Caco-2 (cell line): ENCODE measurements at regions of chr6 and their contacts with region 1.

Region 1: GRCh38 chr6:82712852-82713251 is 349.2 kb downstream of the TPBG start:
- DNase-seq: no peak
- H3K4me3 ChIP-seq: no peak overlapping the region
- H3K4me3 Mint-ChIP-seq: no peak overlapping the region
- H3K27ac Mint-ChIP-seq: no peak overlapping the region
- H3K4me1 ChIP-seq: no peaks in the 10 kb centered on the region
- H3K4me1 Mint-ChIP-seq: no peaks in the 10 kb centered on the region
- H3K27me3 ChIP-seq: no peaks in the 10 kb centered on the region
- H3K27me3 Mint-ChIP-seq: peaks cover 3% of the 10 kb centered on the region
- CTCF ChIP-seq: peak; percentile 5 to 12

Region 2: DNA sequence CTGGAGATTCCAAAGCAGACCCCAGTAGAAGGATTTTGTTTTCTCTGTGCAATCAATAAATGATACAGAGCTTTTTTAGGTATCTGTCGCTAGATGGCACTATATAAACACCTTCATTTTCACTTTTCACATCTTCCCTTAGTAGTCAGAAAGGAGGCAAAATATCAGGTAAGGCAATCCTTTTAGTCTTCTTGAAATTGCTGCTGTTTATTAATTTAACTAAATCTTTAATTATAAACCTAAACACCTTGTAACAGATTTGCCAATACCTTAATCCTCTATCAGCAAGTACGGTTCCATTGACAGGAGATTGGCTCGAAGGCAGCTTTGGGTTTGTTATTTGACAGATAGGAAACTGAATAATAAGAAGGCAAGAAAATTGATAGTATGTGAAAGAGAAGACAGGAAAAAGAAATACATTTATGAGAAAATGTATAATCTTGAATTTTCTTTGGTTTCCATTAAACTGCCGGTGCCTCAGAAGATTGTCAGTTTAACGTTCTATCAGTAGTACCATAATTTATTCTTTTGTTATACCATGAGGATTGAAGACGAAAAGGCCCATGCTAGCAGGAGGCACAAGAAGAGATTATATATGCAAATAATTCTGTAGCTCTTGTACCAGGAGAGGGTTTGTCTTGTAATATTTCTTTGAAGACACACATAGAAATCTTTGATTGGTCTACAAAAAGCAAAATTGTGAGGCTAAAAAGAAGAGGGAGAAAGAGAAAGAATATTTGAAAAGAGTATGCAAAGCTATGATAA is 441.8 kb before region 1 on chr6:
- CTCF ChIA-PET with region 1: no interaction called
- POLR2A ChIA-PET with region 1: no interaction called
- intact Hi-C with region 1: loop called (anchors 5 kb)
- DNase-seq: no peak
- H3K4me3 ChIP-seq: no peak overlapping the region
- H3K4me3 Mint-ChIP-seq: no peak overlapping the region
- H3K27ac Mint-ChIP-seq: no peak overlapping the region
- H3K4me1 ChIP-seq: no peaks in the 10 kb centered on the region
- H3K4me1 Mint-ChIP-seq: peaks cover 6% of the 10 kb centered on the region
- H3K27me3 ChIP-seq: no peaks in the 10 kb centered on the region
- H3K27me3 Mint-ChIP-seq: no peaks in the 10 kb centered on the region
- CTCF ChIP-seq: peak; percentile 58 to 71

Region 3: DNA sequence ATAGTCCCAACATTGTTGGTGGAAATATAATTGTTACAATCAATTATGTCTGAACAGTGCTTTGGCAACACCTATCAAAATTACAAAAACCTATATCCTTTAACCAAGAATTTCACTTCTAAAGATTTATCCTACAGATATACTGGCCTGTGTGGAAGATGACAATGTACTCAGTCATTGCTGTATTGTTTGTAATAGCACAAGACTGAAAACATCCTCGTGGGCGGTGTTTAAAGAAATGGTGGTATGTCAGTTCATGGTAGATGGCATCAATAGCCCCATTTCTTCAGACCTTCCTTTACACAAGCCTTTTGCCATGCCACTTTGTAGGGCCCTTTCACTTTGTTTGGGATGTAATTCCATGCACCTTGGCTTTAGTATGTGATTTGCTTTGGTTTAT is 359.0 kb before region 1 on chr6:
- CTCF ChIA-PET with region 1: no interaction called
- POLR2A ChIA-PET with region 1: no interaction called
- intact Hi-C with region 1: loop called (anchors 10 kb)
- DNase-seq: no peak
- H3K4me3 ChIP-seq: no peak overlapping the region
- H3K4me3 Mint-ChIP-seq: no peak overlapping the region
- H3K27ac Mint-ChIP-seq: no peak overlapping the region
- H3K4me1 ChIP-seq: no peaks in the 10 kb centered on the region
- H3K4me1 Mint-ChIP-seq: no peaks in the 10 kb centered on the region
- H3K27me3 ChIP-seq: 0 out of 2 replicates have a peak, but pooled peaks cover 1% of the 10 kb centered on the region
- H3K27me3 Mint-ChIP-seq: peaks cover 19% of the 10 kb centered on the region
- CTCF ChIP-seq: no peak

Region 4: GRCh38 chr6:82651845-82652335 is 61.0 kb before region 1 on chr6:
- CTCF ChIA-PET with region 1: no interaction called
- POLR2A ChIA-PET with region 1: no interaction called
- intact Hi-C with region 1: no loop called
- DNase-seq: no peak
- H3K4me3 ChIP-seq: no peak overlapping the region
- H3K4me3 Mint-ChIP-seq: no peak overlapping the region
- H3K27ac Mint-ChIP-seq: no peak overlapping the region
- H3K4me1 ChIP-seq: no peaks in the 10 kb centered on the region
- H3K4me1 Mint-ChIP-seq: no peaks in the 10 kb centered on the region
- H3K27me3 ChIP-seq: no peaks in the 10 kb centered on the region
- H3K27me3 Mint-ChIP-seq: peaks cover 6% of the 10 kb centered on the region
- CTCF ChIP-seq: no peak